ENCODE measurements at regions of chr12 and their contacts with region 1.

Region 1: GRCh38 chr12:25250744-25251730 is at the start of gene KRAS:
- DNase-seq: peak; percentile 94
- H3K4me3 Mint-ChIP-seq: peak within 1 kb of the TSS; percentile 93
- H3K27ac Mint-ChIP-seq: peak within 1 kb of the TSS; percentile 88
- H3K4me1 Mint-ChIP-seq: peaks cover 43% of the 10 kb centered on the region
- H3K27me3 Mint-ChIP-seq: no peaks in the 10 kb centered on the region
- total RNA-seq, gene KRAS: 18.9 to 20.6 TPM

Region 2: DNA sequence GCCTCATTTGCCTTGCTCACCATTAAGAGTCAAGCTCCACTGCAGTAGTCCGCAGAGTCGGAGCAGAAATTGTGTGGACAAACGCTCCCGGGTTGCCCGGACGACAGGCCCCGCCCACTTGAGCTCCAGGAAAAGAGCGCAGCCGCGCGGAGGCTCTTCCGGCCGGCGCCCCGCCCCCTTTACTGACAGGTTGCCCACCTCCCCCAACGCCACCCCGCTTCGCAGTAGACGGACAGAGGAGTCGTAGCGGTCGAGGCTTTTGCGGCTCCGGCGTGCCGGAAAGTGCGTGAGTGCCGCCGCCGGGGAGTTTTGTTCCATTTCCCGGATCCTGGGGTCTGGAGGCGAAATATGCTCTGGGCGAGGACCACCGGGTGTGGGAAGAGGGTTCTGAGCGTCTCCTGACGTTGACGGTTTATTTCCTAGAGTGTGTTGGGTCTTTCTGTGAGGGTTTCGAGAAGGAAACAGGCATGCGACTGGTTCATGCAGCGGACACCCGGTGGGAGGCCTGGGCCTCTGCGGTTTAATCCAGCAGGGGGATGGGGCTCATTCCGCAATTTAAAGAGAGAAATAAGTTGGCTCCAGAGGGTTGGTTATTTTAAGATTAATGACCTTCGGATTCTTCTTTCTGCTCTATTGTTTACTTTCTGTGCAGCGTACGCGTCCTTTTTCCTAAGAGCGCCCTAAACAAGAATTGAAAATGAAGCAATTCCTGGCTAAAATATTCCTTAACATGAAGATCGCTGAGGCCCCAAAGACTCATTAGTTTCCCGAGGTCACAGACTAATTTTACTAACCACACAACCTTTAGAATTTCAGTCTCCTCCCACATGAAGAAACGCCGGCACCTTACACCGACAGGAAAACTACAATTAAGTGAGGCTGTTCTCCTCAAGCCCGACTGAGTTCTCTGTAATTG is 55.7 kb before region 1 on chr12 and contains the starts of genes DNAI7 and ETFRF1:
- CTCF ChIA-PET with region 1: no interaction called
- intact Hi-C with region 1: loop called (anchors 1 kb)
- DNase-seq: peak; percentile 94
- H3K4me3 Mint-ChIP-seq: peak within 1 kb of the TSS; percentile 98
- H3K27ac Mint-ChIP-seq: peak within 1 kb of the TSS; percentile 94
- H3K4me1 Mint-ChIP-seq: peaks cover 22% of the 10 kb centered on the region
- H3K27me3 Mint-ChIP-seq: no peaks in the 10 kb centered on the region
- total RNA-seq, gene DNAI7: 0.10 to 0.35 TPM
- total RNA-seq, gene ETFRF1: 11.4 to 13.1 TPM

Region 3: GRCh38 chr12:25308756-25309155 is 57.7 kb after region 1 on chr12:
- CTCF ChIA-PET with region 1: no interaction called
- intact Hi-C with region 1: no loop called
- DNase-seq: no peak
- H3K4me3 Mint-ChIP-seq: no peak overlapping the region
- H3K27ac Mint-ChIP-seq: no peak overlapping the region
- H3K4me1 Mint-ChIP-seq: no peaks in the 10 kb centered on the region
- H3K27me3 Mint-ChIP-seq: no peaks in the 10 kb centered on the region

Region 4: GRCh38 chr12:25734529-25735180 is 483.6 kb after region 1 on chr12:
- CTCF ChIA-PET with region 1: no interaction called
- intact Hi-C with region 1: no loop called
- DNase-seq: no peak
- H3K4me3 Mint-ChIP-seq: no peak overlapping the region
- H3K27ac Mint-ChIP-seq: no peak overlapping the region
- H3K4me1 Mint-ChIP-seq: no peaks in the 10 kb centered on the region
- H3K27me3 Mint-ChIP-seq: peaks cover 2% of the 10 kb centered on the region

Measured in activated naive CD4-positive, alpha-beta T cell treated with anti-CD3 and anti-CD28 coated beads for 36 hours (primary cell).